ENCODE measurements at regions of chr12 and their contacts with region 1.

Region 1: DNA sequence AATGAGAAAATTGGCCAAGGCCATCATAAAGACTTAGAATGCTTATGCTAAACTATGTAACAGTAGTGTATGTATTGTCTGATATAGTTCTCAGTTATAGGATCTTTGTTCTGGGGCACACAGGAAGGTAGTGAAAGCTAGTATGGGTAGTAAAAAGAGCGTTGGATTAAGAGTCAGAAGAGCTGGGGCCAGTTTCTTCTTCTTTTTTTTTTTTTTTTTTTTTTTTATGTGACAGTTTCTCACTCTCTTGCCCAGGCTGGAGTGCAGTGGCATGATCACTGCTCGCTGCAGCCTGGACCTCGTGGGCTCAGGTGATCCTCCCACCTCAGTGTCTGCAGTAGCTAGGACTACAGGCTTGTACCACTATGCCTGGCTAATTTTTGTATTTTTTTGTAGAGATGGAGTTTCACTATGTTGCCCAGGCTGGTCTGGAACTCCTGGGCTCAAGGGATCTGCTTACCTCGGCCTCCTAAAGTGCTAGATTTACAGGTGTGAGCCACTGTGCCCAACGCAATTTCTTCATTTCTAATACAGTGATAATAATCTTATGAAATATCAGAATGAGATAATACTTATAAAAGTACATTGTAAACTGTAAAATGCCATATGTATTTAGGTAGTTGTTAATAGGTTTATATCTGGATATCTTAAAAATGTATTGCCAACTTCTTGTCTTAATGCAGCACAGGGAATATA is 7.4 kb downstream of the MDM2 start:
- DNase-seq: no peak
- H3K4me3 ChIP-seq: no peak overlapping the region
- H3K27ac ChIP-seq: no peak overlapping the region
- H3K4me1 ChIP-seq: no peaks in the 10 kb centered on the region
- H3K27me3 ChIP-seq: no peaks in the 10 kb centered on the region
- CTCF ChIP-seq: no peak

Region 2: DNA sequence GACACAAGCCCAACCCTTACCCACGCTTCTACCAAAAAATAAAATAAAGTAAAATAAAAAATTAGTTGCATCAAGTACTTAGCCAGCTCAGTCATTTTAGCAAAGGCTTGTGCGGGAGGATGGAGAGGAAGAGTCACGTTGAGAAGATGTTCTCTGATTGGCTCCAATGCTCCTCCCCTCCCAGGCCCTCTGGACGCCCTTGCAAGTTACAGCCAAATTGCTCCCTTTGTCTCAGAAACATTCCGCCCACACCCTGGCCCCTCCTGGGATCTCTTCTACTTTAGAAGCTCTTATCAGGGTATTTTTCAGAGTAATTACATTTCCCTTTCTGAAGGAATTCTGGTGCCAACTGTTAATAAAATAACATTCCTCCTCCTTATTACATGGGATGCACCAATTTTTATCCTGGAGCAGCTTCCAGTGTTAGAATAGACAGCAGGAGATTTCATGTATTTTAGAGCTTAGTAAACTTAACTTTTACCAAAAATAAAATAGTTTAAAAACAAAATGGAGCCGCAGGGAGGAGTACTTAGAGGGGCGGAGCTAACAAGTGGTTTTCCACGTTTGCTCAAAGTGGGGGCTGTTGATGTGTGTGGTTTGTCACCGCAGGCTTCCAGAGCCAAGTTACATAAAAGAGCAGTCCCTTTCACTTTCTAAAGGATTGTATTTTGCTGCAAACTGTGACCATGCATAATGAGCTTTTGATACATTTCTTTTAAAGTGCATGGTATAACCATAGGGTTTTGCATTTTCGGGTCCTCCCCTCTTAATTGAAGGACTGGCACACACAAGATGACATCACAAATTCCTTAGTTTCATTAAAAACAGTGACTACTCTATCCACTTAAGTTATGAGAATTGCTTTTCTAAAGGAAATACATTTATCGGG is 276.4 kb before region 1 on chr12:
- CTCF ChIA-PET with region 1: no interaction called
- POLR2A ChIA-PET with region 1: no interaction called
- intact Hi-C with region 1: no loop called
- DNase-seq: peak; percentile 94
- H3K4me3 ChIP-seq: peak overlapping the region; percentile 31
- H3K27ac ChIP-seq: peak overlapping the region; percentile 73
- H3K4me1 ChIP-seq: peaks cover 19% of the 10 kb centered on the region
- H3K27me3 ChIP-seq: no peaks in the 10 kb centered on the region
- CTCF ChIP-seq: no peak

Region 3: DNA sequence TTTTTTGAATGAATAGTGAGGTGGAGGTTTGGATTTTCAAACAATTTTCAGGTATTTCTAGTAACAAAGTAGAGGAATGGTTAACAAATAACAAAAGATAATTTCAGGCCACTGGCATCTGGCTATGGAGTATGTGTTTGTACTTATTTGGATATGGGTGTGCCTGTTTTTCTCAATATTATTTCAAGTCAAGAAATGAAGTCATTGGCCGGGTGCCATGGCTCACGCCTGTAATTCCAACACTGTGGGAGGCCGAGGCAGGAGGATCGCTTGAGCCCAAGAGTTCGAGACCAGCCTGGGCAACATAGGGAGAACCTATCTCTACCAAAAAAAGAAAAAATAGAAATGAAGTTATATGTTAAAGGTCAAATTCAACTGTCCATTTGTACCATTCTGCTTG is 55.5 kb before region 1 on chr12:
- CTCF ChIA-PET with region 1: no interaction called
- POLR2A ChIA-PET with region 1: no interaction called
- intact Hi-C with region 1: no loop called
- DNase-seq: no peak
- H3K4me3 ChIP-seq: no peak overlapping the region
- H3K27ac ChIP-seq: no peak overlapping the region
- H3K4me1 ChIP-seq: no peaks in the 10 kb centered on the region
- H3K27me3 ChIP-seq: no peaks in the 10 kb centered on the region
- CTCF ChIP-seq: no peak

Region 4: DNA sequence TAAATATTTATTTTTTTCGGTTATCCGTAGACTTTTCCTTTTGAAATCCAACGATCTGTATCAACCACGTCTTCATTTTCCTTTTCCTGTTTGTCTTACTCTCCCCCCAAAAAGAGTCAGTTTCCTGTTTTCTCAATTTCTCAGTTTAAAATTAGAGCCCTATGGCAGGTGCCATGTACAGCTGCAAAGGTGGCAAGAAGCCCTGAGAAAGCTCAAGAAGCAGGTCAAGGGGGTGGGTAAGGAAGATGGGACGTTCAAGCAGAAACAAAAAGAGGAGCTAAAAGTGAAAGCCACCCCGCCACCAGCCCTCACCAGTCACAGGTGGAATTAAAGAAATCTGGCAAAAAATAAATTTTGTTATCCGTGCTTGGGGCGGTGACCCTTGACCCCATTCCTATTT is 42.7 kb before region 1 on chr12:
- CTCF ChIA-PET with region 1: no interaction called
- POLR2A ChIA-PET with region 1: no interaction called
- intact Hi-C with region 1: no loop called
- DNase-seq: no peak
- H3K4me3 ChIP-seq: no peak overlapping the region
- H3K27ac ChIP-seq: no peak overlapping the region
- H3K4me1 ChIP-seq: no peaks in the 10 kb centered on the region
- H3K27me3 ChIP-seq: no peaks in the 10 kb centered on the region
- CTCF ChIP-seq: no peak

Region 5: GRCh38 chr12:68786929-68787328 is 28.5 kb before region 1 on chr12:
- CTCF ChIA-PET with region 1: no interaction called
- POLR2A ChIA-PET with region 1: interaction called, 13 read pairs
- intact Hi-C with region 1: no loop called
- DNase-seq: no peak
- H3K4me3 ChIP-seq: no peak overlapping the region
- H3K27ac ChIP-seq: no peak overlapping the region
- H3K4me1 ChIP-seq: no peaks in the 10 kb centered on the region
- H3K27me3 ChIP-seq: no peaks in the 10 kb centered on the region
- CTCF ChIP-seq: 0 out of 2 replicates have a peak, but pooled peaks have one; percentile 16